ENCODE measurements at regions of chr3 and their contacts with region 1.

Region 1: DNA sequence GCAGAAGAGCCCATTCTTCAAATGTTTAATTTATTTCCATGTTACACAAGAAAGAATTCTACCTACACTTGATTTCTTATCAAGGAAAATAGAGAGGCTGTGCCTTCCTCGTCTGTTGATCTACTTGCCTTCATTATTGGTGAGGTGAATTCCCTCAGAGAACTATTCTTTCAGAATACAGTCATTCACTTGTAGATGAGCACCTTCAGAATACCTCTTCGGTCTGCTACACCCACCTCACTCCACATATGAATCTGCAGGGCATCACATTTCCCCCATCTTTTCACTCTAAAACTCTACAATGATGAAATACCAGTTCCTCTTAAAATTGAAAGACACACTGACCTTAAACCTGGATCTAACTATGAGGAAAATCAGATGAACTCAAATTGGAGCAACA is 43.0 kb downstream of the TAFA4 start:
- DNase-seq: no peak

Region 2: GRCh38 chr3:67109651-67110204 is 1779.6 kb before region 1 on chr3:
- intact Hi-C with region 1: loop called (anchors 5 kb)
- DNase-seq: peak in 7 of 42 donors; percentile 4 to 39 (median 12)

Region 3: DNA sequence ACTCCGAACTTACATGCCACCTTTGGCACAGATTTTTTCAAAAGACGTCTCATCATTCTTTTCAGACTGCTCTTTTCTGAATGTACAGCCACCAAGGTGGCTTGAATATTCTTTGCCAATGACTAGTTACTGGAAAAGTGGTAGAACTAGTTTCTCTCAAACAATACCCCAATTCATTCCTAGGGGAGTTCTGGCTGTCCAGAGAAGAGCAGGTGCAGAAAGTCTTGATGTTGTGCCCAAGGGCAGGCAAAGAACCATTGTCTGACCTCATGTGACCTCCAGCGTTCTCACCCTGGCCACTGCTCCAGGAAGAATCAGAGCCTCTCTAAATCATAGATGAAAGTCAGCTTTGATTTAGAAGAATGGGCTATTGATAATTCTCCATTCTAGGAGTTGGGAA is 227.6 kb after region 1 on chr3:
- intact Hi-C with region 1: no loop called
- DNase-seq: peak in 41 of 42 donors; percentile 32 to 92 (median 76)